OCI-LY7 (cell line): ENCODE measurements at regions of chr5 and their contacts with region 1.

Region 1: GRCh38 chr5:126776497-126777256 is at the start of gene LMNB1:
- DNase-seq: peak; percentile 96
- H3K4me3 ChIP-seq: peak within 1 kb of the TSS; percentile 96
- H3K27ac ChIP-seq: peak within 1 kb of the TSS; percentile 95
- H3K4me1 ChIP-seq: peaks cover 19% of the 10 kb centered on the region
- CTCF ChIP-seq: no peak; the same call in 1 of the 2 replicates
- total RNA-seq, gene LMNB1: 173 and 232 TPM in 2 replicates

Region 2: GRCh38 chr5:126600631-126601511 is 175.8 kb before region 1 on chr5 and contains the start of gene PHAX:
- CTCF ChIA-PET with region 1: no interaction called
- POLR2A ChIA-PET with region 1: interaction called, 16 read pairs
- intact Hi-C with region 1: loop called (anchors 2 kb)
- DNase-seq: peak; percentile 90
- H3K4me3 ChIP-seq: peak within 1 kb of the TSS; percentile 86
- H3K27ac ChIP-seq: peak within 1 kb of the TSS; percentile 97
- H3K4me1 ChIP-seq: peaks cover 36% of the 10 kb centered on the region
- CTCF ChIP-seq: peak; percentile 82
- total RNA-seq, gene PHAX: 73.8 and 89.7 TPM in 2 replicates

Region 3: DNA sequence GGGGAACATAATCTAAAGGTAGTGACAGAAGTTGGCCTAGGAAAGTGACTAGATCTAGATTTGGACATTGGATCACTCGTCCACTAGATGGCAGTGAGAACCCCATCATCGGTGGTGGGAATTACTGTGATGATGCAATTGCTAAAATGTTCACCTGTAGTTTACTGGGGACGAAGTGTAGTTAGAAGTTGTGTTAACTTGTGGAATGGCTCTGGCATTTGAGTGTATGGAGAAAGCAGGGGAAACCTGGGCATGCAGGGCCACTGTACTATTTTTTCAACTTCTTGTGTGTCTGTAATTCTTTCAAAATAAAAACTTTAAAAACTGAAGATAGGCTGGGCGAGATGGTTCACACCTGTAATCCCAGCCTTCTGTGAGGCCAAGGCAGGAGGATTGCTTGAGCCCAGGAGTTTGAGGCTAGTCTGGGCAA is 100.5 kb before region 1 on chr5:
- CTCF ChIA-PET with region 1: interaction called, 5 read pairs
- POLR2A ChIA-PET with region 1: interaction called, 9 read pairs
- intact Hi-C with region 1: loop called (anchors 1 kb)
- DNase-seq: peak; percentile 82
- H3K4me3 ChIP-seq: no peak overlapping the region
- H3K27ac ChIP-seq: no peak overlapping the region
- H3K4me1 ChIP-seq: peaks cover 15% of the 10 kb centered on the region
- CTCF ChIP-seq: peak; percentile 95

Region 4: GRCh38 chr5:126736141-126736540 is 40.5 kb before region 1 on chr5:
- CTCF ChIA-PET with region 1: no interaction called
- POLR2A ChIA-PET with region 1: no interaction called
- intact Hi-C with region 1: no loop called
- DNase-seq: no peak
- H3K4me3 ChIP-seq: no peak overlapping the region
- H3K27ac ChIP-seq: no peak overlapping the region
- H3K4me1 ChIP-seq: no peaks in the 10 kb centered on the region
- CTCF ChIP-seq: no peak

Region 5: GRCh38 chr5:126754609-126755008 is 22.1 kb before region 1 on chr5:
- CTCF ChIA-PET with region 1: interaction called, 3 read pairs
- POLR2A ChIA-PET with region 1: interaction called, 41 read pairs
- intact Hi-C with region 1: no loop called
- DNase-seq: no peak
- H3K4me3 ChIP-seq: no peak overlapping the region
- H3K27ac ChIP-seq: no peak overlapping the region
- H3K4me1 ChIP-seq: peaks cover 21% of the 10 kb centered on the region
- CTCF ChIP-seq: no peak

Region 6: DNA sequence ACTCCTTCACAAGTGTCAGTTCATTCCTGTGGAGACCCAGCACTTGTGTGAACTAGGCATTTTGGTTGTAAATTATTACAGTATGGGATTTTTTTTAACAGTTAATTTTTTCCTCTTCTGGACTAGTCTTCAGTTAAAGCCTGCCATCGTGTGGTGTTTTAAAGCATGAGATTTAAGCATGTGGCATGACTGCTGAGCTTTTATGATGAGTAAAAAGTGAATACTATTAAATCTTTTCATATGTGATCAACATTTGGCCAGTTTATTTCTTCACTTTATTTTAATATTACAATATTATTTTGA is 25.3 kb after region 1 on chr5:
- CTCF ChIA-PET with region 1: interaction called, 5 read pairs
- POLR2A ChIA-PET with region 1: interaction called, 19 read pairs
- intact Hi-C with region 1: loop called (anchors 2 kb)
- DNase-seq: peak; percentile 56
- H3K4me3 ChIP-seq: no peak overlapping the region
- H3K27ac ChIP-seq: peak overlapping the region; percentile 10
- H3K4me1 ChIP-seq: peaks cover 46% of the 10 kb centered on the region
- CTCF ChIP-seq: peak; percentile 77

Region 7: DNA sequence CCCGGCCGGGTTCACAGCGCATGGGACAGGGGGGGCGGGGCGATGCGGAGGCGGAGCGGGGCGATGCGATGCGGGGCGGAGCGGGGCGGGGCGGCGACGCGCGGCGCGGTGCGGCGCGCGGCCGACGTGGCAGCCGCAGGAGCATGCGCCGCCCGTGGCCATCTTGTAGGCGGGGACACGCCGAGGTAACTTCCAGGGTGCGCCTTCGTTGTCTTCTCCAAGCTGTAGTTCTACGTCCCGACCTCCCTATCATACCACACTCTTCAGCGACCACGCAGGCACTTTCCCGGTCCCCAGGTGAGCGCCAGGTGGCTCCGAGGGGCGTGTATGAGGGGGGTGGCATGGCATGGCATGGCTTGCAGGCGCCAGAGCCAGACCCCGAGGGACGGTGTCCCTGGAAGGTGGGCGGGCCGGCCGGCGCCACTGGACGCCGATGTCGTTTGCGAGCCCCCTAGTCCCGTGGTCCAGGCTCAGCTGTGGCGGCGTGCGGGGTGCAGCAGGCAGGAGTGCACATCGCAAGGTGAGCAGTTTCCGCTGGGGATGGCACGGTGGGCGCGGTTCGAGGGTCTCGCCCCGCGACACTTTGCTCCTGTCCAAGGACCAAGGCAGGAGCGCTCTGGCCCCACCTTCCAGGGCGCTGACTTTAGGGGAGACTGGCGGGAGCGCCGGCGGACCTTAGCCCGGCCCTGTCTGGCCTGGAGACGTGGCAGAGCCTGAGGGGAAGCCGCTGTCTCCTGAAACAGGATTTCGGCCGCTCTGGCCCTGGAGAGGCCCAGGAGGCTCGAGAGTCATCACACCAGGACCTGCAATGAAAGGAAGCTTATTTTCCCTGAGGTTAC is 741.0 kb after region 1 on chr5 and contains the start of gene PRRC1:
- CTCF ChIA-PET with region 1: no interaction called
- POLR2A ChIA-PET with region 1: no interaction called
- intact Hi-C with region 1: loop called (anchors 5 kb)
- DNase-seq: peak; percentile 87
- H3K4me3 ChIP-seq: peak within 1 kb of the TSS; percentile 99
- H3K27ac ChIP-seq: peak within 1 kb of the TSS; percentile 51
- H3K4me1 ChIP-seq: peaks cover 14% of the 10 kb centered on the region
- CTCF ChIP-seq: no peak
- total RNA-seq, gene PRRC1: 32.7 and 37.3 TPM in 2 replicates